ENCODE measurements at regions of chr19 and their contacts with region 1.

Region 1: GRCh38 chr19:10305139-10305806 is 4.3 kb downstream of the ZGLP1 start:
- DNase-seq: peak; percentile 61 to 76 (median 71)
- H3K4me3 ChIP-seq: peak overlapping the region in 4 of 7 experiments; percentile 10 to 52 (median 38)
- H3K27ac ChIP-seq: peak overlapping the region in 1 of 2 experiments; percentile 58
- H3K4me1 ChIP-seq: peaks cover 0 to 52% (median 46%) of the 10 kb centered on the region in 4 experiments
- H3K27me3 ChIP-seq: no peaks in the 10 kb centered on the region

Region 2: DNA sequence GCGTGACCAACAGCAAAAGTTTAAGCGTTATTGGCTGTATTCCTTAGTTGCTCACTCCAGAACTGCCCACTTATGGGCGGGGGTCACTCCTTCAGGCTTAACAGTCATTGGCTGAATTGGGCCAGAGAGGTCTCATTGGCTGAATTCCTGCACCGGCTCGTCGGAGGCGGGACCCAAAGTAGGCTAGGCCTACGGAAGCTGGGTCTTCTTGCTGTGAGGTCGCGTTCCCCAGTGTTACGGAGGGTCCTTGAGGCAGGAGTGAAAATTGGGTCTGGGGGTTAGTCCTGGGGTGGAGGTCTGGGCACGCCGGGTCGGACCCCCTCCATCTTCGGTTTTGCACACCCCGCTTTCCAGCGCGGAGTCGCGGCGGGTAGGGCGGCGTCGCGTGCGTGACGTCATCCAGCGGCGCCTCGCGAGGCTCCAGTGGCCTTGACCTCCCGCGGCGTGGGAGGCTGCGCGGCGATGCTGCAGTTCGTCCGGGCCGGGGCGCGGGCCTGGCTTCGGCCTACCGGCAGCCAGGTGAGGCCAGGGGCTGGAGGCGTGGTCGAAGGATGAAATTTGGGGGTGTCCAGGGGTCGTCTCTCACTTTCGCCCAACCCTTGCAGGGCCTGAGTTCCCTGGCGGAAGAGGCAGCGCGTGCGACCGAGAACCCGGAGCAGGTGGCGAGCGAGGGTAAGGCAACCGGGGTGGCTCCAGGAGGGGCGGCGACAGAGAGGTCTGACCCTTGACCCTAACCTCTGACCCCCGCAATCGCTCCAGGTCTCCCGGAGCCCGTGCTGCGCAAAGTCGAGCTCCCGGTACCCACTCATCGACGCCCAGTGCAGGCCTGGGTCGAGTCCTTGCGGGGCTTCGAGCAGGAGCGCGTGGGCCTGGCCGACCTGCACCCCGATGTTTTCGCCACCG is 53.2 kb before region 1 on chr19 and contains the start of gene MRPL4:
- CTCF ChIA-PET with region 1: no interaction called
- POLR2A ChIA-PET with region 1: no interaction called
- DNase-seq: peak; percentile 99
- H3K4me3 ChIP-seq: peak within 1 kb of the TSS; percentile 74 to 95 (median 88)
- H3K27ac ChIP-seq: peak within 1 kb of the TSS; percentile 50 to 79
- H3K4me1 ChIP-seq: peaks cover 5 to 19% (median 15%) of the 10 kb centered on the region in 4 experiments
- H3K27me3 ChIP-seq: no peaks in the 10 kb centered on the region

Region 3: DNA sequence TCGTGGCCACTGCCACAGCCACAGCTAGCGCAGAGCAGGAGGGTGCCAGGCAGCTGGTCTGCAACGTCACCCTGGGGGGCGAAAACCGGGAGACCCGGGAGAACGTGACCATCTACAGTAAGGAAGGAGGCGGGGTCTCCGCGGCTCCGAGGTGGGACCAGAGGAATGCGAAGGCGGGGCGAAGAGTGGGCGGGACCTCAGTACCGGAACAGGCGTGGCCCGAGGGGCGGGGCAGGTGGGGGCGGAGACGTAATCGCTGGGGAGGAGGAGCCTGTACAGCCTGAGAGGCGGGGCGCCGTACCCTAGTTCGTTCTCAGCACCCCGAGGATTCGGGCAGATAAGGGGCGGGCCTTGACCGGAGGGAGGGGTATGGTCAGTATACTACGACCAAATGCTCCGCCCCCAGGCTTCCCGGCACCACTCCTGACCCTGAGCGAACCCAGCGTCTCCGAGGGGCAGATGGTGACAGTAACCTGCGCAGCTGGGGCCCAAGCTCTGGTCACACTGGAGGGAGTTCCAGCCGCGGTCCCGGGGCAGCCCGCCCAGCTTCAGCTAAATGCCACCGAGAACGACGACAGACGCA is 13.0 kb before region 1 on chr19:
- CTCF ChIA-PET with region 1: interaction called, 21 read pairs
- POLR2A ChIA-PET with region 1: interaction called, 11 read pairs
- DNase-seq: peak; percentile 72 to 75 (median 75)
- H3K4me3 ChIP-seq: peak overlapping the region; percentile 2 to 76 (median 54)
- H3K27ac ChIP-seq: peak overlapping the region in 1 of 2 experiments; percentile 54
- H3K4me1 ChIP-seq: peaks cover 5 to 91% (median 83%) of the 10 kb centered on the region in 4 experiments
- H3K27me3 ChIP-seq: peaks cover 0 to 70% (median 52%) of the 10 kb centered on the region in 5 experiments

Region 4: GRCh38 chr19:10321412-10321786 is 16.1 kb after region 1 on chr19:
- CTCF ChIA-PET with region 1: interaction called, 10 read pairs
- POLR2A ChIA-PET with region 1: no interaction called
- DNase-seq: no peak
- H3K4me3 ChIP-seq: no peak overlapping the region
- H3K27ac ChIP-seq: no peak overlapping the region
- H3K4me1 ChIP-seq: no peaks in the 10 kb centered on the region
- H3K27me3 ChIP-seq: no peaks in the 10 kb centered on the region

Measured in common myeloid progenitor, CD34-positive (primary cell).